ENCODE measurements at regions of chr12 and their contacts with region 1.

Region 1: GRCh38 chr12:48157018-48157888 is at the start of gene ASB8:
- DNase-seq: peak; percentile 100
- ATAC-seq: peak; percentile 96
- H3K4me3 Mint-ChIP-seq: peak within 1 kb of the TSS; percentile 95
- H3K27ac Mint-ChIP-seq: peak within 1 kb of the TSS; percentile 96
- H3K4me1 Mint-ChIP-seq: peaks cover 40% of the 10 kb centered on the region
- H3K27me3 Mint-ChIP-seq: no peaks in the 10 kb centered on the region
- total RNA-seq, gene ASB8: 37.9 to 47.2 TPM

Region 2: DNA sequence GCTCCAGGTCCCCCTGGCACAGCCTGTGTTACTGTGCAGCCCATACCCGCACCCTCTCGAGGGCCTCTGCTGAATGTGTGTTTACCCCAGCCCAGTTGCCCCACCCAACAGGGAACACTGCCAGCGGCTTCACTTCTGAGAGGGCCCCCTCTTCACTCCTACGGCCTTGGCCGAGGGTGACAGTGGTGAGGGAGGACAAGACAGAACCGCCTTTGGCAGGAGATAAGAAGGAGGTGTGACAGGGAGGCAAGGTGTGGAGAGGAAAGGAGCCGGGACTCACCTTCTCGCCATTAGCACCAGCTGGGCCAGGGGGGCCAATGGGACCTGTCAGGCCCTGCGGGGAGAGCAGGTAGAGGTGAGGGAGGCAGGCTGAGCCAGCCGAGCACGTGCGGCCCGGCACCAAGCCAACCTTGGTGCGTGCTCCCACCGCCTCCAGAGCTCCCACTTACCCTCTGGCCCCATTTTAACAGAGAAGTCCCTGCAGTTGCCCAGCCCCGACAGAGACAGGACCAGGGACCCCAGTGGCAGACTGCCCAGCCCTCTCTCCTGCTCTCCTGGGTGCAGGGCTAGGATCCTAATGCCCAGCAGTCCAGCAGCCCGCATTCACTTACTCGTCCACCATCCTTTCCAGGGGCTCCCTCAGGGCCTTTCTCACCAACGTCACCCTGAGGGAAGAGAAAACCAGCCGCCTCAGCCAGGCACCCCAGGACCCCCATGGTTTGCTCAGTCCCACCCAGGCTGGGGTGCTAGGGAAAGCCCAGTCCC is 175.6 kb before region 1 on chr12:
- CTCF ChIA-PET with region 1: no interaction called
- POLR2A ChIA-PET with region 1: no interaction called
- DNase-seq: no peak
- ATAC-seq: no peak
- H3K4me3 Mint-ChIP-seq: no peak overlapping the region
- H3K27ac Mint-ChIP-seq: no peak overlapping the region
- H3K4me1 Mint-ChIP-seq: no peaks in the 10 kb centered on the region
- H3K27me3 Mint-ChIP-seq: peaks cover 16% of the 10 kb centered on the region

Region 3: GRCh38 chr12:48105862-48106680 is 51.2 kb before region 1 on chr12 and contains the start of gene SENP1:
- CTCF ChIA-PET with region 1: interaction called, 13 read pairs
- POLR2A ChIA-PET with region 1: interaction called, 35 read pairs
- DNase-seq: peak; percentile 92
- ATAC-seq: peak; percentile 81
- H3K4me3 Mint-ChIP-seq: peak within 1 kb of the TSS; percentile 88
- H3K27ac Mint-ChIP-seq: peak within 1 kb of the TSS; percentile 94
- H3K4me1 Mint-ChIP-seq: peaks cover 54% of the 10 kb centered on the region
- H3K27me3 Mint-ChIP-seq: no peaks in the 10 kb centered on the region
- total RNA-seq, gene SENP1: 45.6 to 50.1 TPM

Region 4: DNA sequence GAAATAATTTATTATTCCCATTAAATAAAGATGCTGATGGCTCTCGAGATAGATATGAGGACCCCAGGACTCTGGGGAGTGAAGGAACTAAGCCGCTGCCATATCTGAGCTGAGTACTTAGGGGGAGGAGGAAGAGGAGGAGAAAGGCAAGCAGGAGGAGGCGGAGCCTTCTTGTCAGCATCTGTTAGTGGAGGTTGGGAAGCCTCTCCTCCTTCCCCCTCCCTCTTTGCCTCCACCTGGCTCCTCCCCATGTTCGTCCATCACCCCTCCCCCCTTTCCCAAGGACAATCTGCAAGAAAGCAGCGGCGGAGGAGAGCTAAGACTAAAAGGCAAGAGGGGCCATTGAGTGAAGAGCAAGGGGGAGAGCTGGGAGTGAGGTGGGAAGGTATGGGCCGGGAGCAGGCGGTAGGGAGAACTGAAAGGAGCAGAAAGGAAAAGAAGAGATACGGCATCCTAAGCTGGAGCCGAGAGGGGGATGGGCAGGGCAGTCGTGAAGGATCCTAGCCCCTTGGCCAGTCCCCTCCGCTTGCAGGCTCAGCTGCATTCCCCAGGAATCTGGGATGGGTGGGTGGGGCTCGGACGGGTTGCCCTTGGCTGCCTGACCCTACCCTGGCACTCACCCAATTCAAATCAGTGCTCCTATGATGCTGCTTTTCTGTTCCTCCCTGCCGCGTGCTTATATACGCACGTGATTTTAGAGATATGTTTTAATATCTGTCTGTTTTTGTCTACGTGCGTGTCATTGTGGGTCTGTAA is 38.0 kb before region 1 on chr12 and contains the start of gene PFKM:
- CTCF ChIA-PET with region 1: interaction called, 15 read pairs
- POLR2A ChIA-PET with region 1: interaction called, 3 read pairs
- DNase-seq: peak; percentile 85
- ATAC-seq: peak; percentile 100
- H3K4me3 Mint-ChIP-seq: peak within 1 kb of the TSS; percentile 95
- H3K27ac Mint-ChIP-seq: peak within 1 kb of the TSS; percentile 77
- H3K4me1 Mint-ChIP-seq: peaks cover 18% of the 10 kb centered on the region
- H3K27me3 Mint-ChIP-seq: peaks cover 21% of the 10 kb centered on the region
- total RNA-seq, gene PFKM: 20.6 to 22.7 TPM

Region 5: DNA sequence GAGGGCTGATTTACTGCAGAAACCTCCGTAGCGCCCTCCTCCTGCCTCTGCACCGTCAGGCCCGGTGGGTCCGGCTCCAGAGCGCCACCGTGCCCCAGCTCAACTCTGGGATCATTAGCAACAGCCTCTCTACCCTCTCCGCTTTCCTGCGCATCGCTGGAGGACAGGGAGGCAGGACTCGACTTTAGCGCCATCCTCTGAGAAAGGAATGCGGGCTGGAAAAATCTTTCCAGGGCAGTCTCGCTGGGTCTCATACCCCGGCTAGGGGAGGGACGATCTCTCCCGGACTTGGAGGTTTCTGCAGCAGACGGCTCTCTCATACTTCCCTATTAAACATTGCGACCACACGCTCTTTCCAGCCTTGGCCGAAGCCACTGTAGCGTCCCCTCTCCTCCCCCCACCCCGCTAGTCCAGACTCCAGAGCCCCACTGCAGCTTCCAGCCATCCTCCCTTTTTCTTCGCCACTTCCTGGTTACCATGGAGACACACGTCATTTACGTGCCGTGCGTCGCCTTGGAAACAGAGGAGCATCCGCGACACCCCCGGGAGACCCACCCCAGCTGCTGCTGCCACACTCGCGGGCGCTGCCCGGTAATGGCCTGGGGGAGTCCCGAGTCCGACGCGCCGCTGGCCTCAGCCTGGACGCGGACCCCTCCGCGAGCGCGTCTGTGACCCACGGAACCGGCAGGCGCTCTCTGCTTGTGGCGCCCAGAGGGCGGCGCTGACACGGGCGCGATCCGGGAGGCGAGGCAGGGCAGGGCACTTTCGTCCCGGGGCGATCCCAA is 26.0 kb after region 1 on chr12 and contains the start of gene CCDC184:
- CTCF ChIA-PET with region 1: interaction called, 10 read pairs
- POLR2A ChIA-PET with region 1: interaction called, 6 read pairs
- DNase-seq: peak; percentile 78
- ATAC-seq: peak; percentile 78
- H3K4me3 Mint-ChIP-seq: peak within 1 kb of the TSS; percentile 89
- H3K27ac Mint-ChIP-seq: peak within 1 kb of the TSS; percentile 41
- H3K4me1 Mint-ChIP-seq: peaks cover 13% of the 10 kb centered on the region
- H3K27me3 Mint-ChIP-seq: peaks cover 72% of the 10 kb centered on the region
- total RNA-seq, gene CCDC184: 1.4 to 1.5 TPM

Region 6: DNA sequence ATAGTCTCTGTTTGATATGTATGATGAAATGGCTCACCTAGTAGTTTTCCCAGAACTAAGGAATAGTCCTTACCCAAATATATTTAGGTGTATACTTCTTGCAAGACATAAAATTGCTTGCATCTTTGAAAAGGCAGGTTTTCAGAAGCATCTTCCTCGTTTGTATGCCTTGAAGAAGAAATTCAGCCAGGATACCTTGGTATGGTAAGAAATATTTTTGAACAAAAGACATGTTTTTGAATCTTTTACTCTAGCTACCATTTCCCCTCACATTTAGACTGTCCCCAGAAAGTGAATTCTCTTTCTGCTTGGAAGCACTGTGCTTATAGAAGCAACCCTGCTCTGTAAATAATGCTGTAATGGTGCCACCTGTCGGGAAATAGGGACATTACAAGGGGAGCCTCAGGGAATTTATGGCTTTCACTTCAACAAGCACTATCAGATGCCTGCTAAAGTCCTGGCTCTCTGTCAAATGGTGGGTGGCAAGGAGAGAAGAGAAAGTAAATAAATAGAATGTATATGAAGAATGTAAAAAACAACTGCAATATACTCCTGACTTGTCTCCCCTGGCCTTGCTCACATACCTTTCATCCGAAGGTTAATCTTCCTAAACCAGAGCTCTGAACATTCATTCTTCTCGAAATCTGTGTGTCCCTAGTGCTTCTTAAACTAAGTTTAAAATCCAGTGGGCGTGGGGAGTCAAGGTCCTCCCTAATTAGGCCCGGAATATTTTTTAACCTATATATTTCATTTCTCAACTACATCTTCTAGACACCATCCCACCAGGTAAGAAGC is 32.3 kb after region 1 on chr12:
- CTCF ChIA-PET with region 1: interaction called, 10 read pairs
- POLR2A ChIA-PET with region 1: no interaction called
- DNase-seq: peak; percentile 81
- ATAC-seq: peak; percentile 57
- H3K4me3 Mint-ChIP-seq: no peak overlapping the region
- H3K27ac Mint-ChIP-seq: no peak overlapping the region
- H3K4me1 Mint-ChIP-seq: peaks cover 1% of the 10 kb centered on the region
- H3K27me3 Mint-ChIP-seq: peaks cover 57% of the 10 kb centered on the region

Region 7: DNA sequence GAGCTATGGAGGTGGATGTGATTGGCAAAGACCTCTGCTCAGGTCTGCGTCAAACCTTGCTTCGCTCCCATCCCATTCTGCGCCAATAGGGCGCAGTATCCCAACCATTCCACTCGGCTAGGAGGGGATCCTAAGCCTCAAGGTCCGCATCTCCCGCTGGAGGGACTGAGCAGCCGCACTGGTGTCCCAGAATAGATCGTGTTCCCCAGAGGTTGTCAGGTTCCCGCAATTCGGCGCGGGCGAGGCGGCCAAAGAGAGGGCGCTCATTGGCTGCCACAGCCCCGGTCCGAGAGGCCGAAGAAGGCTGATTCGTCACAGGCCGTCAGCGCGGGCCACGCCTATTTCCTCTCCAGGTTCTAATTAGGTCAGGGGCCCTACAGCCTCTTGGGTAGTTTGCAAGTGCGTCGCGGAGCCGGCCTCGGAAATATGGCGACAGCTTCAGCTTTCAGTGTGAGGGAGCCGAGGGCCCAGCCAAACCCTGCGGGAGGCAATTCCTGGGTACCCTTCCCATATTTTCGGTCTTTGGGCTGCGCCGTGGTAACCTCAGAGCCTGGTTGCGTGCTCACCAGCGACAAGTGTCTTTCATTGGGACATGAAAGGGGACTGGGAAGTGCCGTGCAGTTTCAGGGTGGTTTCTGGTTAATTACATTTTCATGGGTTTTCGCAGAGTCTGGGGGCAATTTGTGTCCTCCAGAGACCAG is 40.9 kb after region 1 on chr12:
- CTCF ChIA-PET with region 1: interaction called, 13 read pairs
- POLR2A ChIA-PET with region 1: interaction called, 6 read pairs
- DNase-seq: peak; percentile 95
- ATAC-seq: peak; percentile 98
- H3K4me3 Mint-ChIP-seq: peak overlapping the region; percentile 76
- H3K27ac Mint-ChIP-seq: peak overlapping the region; percentile 97
- H3K4me1 Mint-ChIP-seq: peaks cover 42% of the 10 kb centered on the region
- H3K27me3 Mint-ChIP-seq: peaks cover 17% of the 10 kb centered on the region

Region 8: DNA sequence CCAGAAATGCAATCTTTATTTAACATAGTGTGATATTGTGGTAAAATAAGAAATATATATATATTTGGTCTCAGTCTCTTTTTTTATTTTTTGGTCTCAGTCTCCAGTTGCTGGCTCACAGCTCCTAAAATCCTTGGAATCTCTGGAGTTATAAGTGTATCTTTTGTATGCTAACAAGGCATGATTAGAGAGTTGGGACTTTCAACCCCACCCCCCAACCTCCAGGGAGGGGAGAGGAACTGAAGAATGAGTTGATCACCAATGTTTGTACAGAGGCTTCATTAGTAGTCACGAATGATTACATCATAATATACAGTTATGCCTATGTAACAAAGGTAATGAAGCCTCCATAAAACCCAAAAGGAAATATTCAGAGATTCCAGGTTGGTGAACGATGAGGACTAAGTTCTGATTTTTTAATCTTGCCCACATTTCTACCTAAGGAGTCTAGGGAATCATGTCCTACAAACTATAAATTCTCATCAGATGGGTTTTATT is 435.4 kb after region 1 on chr12:
- CTCF ChIA-PET with region 1: no interaction called
- POLR2A ChIA-PET with region 1: no interaction called
- DNase-seq: no peak
- ATAC-seq: no peak
- H3K4me3 Mint-ChIP-seq: no peak overlapping the region
- H3K27ac Mint-ChIP-seq: no peak overlapping the region
- H3K4me1 Mint-ChIP-seq: no peaks in the 10 kb centered on the region
- H3K27me3 Mint-ChIP-seq: peaks cover 32% of the 10 kb centered on the region